B cell (primary cell): ENCODE measurements at regions of chr6 and their contacts with region 1.

Region 1: GRCh38 chr6:132279592-132280139 is 121.6 kb downstream of the MOXD1 start:
- DNase-seq: peak; percentile 90
- ATAC-seq: peak; percentile 84
- H3K4me3 ChIP-seq: peak overlapping the region; percentile 34 to 79 (median 48)
- H3K4me3 Mint-ChIP-seq: peak overlapping the region; percentile 92
- H3K27ac ChIP-seq: no peak overlapping the region
- H3K27ac Mint-ChIP-seq: peak overlapping the region; percentile 54
- H3K4me1 ChIP-seq: no peaks in the 10 kb centered on the region
- H3K4me1 Mint-ChIP-seq: no peaks in the 10 kb centered on the region
- H3K27me3 ChIP-seq: no peaks in the 10 kb centered on the region
- H3K27me3 Mint-ChIP-seq: peaks cover 4% of the 10 kb centered on the region
- CTCF ChIP-seq: peak; percentile 100

Region 2: GRCh38 chr6:131914967-131915751 is 364.5 kb before region 1 on chr6:
- CTCF ChIA-PET with region 1: interaction called, 10 read pairs
- POLR2A ChIA-PET with region 1: no interaction called
- intact Hi-C with region 1: loop called (anchors 2 kb)
- DNase-seq: peak; percentile 75
- ATAC-seq: peak; percentile 80
- H3K4me3 ChIP-seq: no peak overlapping the region
- H3K4me3 Mint-ChIP-seq: no peak overlapping the region
- H3K27ac ChIP-seq: no peak overlapping the region
- H3K27ac Mint-ChIP-seq: no peak overlapping the region
- H3K4me1 ChIP-seq: peaks cover 17 to 20% of the 10 kb centered on the region in 2 donors
- H3K4me1 Mint-ChIP-seq: peaks cover 21% of the 10 kb centered on the region
- H3K27me3 ChIP-seq: peaks cover 0 to 27% (median 12%) of the 10 kb centered on the region in 4 experiments
- H3K27me3 Mint-ChIP-seq: peaks cover 39% of the 10 kb centered on the region
- CTCF ChIP-seq: peak; percentile 88

Region 3: GRCh38 chr6:132063738-132064137 is 215.9 kb before region 1 on chr6:
- CTCF ChIA-PET with region 1: no interaction called
- POLR2A ChIA-PET with region 1: no interaction called
- intact Hi-C with region 1: no loop called
- DNase-seq: no peak
- ATAC-seq: no peak
- H3K4me3 ChIP-seq: no peak overlapping the region
- H3K4me3 Mint-ChIP-seq: no peak overlapping the region
- H3K27ac ChIP-seq: no peak overlapping the region
- H3K27ac Mint-ChIP-seq: no peak overlapping the region
- H3K4me1 ChIP-seq: no peaks in the 10 kb centered on the region
- H3K4me1 Mint-ChIP-seq: peaks cover 5% of the 10 kb centered on the region
- H3K27me3 ChIP-seq: no peaks in the 10 kb centered on the region
- H3K27me3 Mint-ChIP-seq: no peaks in the 10 kb centered on the region
- CTCF ChIP-seq: no peak

Region 4: DNA sequence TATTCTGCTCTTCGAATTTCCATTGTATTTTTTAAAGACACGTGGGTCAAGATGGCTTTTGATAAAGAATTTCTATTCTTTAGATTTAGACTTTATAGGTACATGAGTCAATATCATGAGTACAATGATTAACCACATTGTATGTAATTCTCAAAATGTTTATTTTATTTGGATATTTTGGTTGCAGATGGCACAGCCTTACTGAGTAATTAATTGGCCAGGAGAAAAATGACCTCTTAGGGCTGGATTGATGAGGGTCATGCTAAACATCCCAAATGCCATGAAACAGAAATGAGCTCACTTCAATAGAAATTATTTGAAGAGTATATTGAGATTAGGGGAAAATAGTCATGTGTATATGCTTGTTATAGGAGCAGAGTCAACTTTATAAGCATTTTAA is 197.2 kb before region 1 on chr6:
- CTCF ChIA-PET with region 1: no interaction called
- POLR2A ChIA-PET with region 1: no interaction called
- intact Hi-C with region 1: no loop called
- DNase-seq: no peak
- ATAC-seq: no peak
- H3K4me3 ChIP-seq: no peak overlapping the region
- H3K4me3 Mint-ChIP-seq: no peak overlapping the region
- H3K27ac ChIP-seq: no peak overlapping the region
- H3K27ac Mint-ChIP-seq: no peak overlapping the region
- H3K4me1 ChIP-seq: peaks cover 0 to 8% of the 10 kb centered on the region in 2 donors
- H3K4me1 Mint-ChIP-seq: peaks cover 14% of the 10 kb centered on the region
- H3K27me3 ChIP-seq: no peaks in the 10 kb centered on the region
- H3K27me3 Mint-ChIP-seq: no peaks in the 10 kb centered on the region
- CTCF ChIP-seq: no peak

Region 5: GRCh38 chr6:132333639-132334520 is 54.2 kb after region 1 on chr6:
- CTCF ChIA-PET with region 1: interaction called, 10 read pairs
- POLR2A ChIA-PET with region 1: no interaction called
- intact Hi-C with region 1: no loop called
- DNase-seq: no peak
- ATAC-seq: no peak
- H3K4me3 ChIP-seq: no peak overlapping the region
- H3K4me3 Mint-ChIP-seq: no peak overlapping the region
- H3K27ac ChIP-seq: no peak overlapping the region
- H3K27ac Mint-ChIP-seq: no peak overlapping the region
- H3K4me1 ChIP-seq: no peaks in the 10 kb centered on the region
- H3K4me1 Mint-ChIP-seq: peaks cover 5% of the 10 kb centered on the region
- H3K27me3 ChIP-seq: no peaks in the 10 kb centered on the region
- H3K27me3 Mint-ChIP-seq: peaks cover 5% of the 10 kb centered on the region
- CTCF ChIP-seq: no peak

Region 6: GRCh38 chr6:132391391-132392271 is 112.0 kb after region 1 on chr6:
- CTCF ChIA-PET with region 1: interaction called, 126 read pairs
- POLR2A ChIA-PET with region 1: no interaction called
- intact Hi-C with region 1: loop called (anchors 1 kb)
- DNase-seq: no peak
- ATAC-seq: no peak
- H3K4me3 ChIP-seq: no peak overlapping the region
- H3K4me3 Mint-ChIP-seq: no peak overlapping the region
- H3K27ac ChIP-seq: no peak overlapping the region
- H3K27ac Mint-ChIP-seq: no peak overlapping the region
- H3K4me1 ChIP-seq: peaks cover 5 to 27% of the 10 kb centered on the region in 2 donors
- H3K4me1 Mint-ChIP-seq: peaks cover 27% of the 10 kb centered on the region
- H3K27me3 ChIP-seq: no peaks in the 10 kb centered on the region
- H3K27me3 Mint-ChIP-seq: no peaks in the 10 kb centered on the region
- CTCF ChIP-seq: no peak

Region 7: DNA sequence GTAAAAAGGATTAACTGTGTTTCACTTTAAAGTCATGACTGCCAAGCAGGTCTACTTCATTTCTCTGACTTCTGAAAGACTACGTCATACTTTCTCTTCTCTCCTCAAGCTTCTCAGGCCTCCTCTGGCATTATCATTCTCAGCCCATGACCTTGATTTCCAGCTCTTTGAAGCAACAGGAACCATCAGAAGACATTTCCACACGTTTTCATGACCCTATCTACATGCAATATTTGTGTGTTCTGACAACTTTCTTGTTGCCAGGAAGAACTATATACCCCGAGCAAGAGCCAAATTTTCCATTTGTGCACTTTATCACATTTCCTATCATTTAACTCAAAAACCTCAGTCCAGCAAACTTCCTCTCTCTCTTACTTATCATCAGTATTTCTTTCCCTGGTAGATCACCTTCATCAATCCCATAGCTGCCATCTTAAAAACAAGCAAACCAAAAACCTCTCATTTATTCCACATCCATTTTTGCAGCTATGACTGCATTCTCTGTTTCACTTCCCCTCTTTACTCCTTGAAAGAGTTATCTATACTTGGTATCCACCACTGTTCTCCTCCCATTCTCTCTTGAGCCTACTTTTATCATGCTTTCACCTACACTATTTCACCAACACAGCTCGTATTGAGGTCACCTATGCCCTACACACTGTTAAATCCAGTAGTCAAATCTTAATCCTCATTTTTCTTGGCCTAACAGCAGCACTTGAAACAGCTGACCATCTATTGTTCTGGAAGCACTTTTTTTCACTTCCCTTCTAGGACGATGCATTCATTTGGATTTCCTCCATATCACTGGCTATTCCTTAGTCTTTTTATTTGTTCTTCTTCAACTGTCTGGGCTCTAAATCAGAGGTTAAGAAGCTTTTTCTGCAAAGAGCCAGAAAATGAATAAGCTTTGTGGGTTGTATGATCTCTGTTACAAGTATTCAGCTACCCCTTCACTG is 186.1 kb after region 1 on chr6:
- CTCF ChIA-PET with region 1: interaction called, 22 read pairs
- POLR2A ChIA-PET with region 1: no interaction called
- intact Hi-C with region 1: no loop called
- DNase-seq: no peak
- ATAC-seq: peak; percentile 41
- H3K4me3 ChIP-seq: no peak overlapping the region
- H3K4me3 Mint-ChIP-seq: no peak overlapping the region
- H3K27ac ChIP-seq: peak overlapping the region; percentile 34 to 62
- H3K27ac Mint-ChIP-seq: no peak overlapping the region
- H3K4me1 ChIP-seq: peaks cover 15 to 22% of the 10 kb centered on the region in 2 donors
- H3K4me1 Mint-ChIP-seq: peaks cover 7% of the 10 kb centered on the region
- H3K27me3 ChIP-seq: no peaks in the 10 kb centered on the region
- H3K27me3 Mint-ChIP-seq: no peaks in the 10 kb centered on the region
- CTCF ChIP-seq: no peak

Region 8: GRCh38 chr6:132490024-132490423 is 210.4 kb after region 1 on chr6:
- CTCF ChIA-PET with region 1: interaction called, 105 read pairs
- POLR2A ChIA-PET with region 1: interaction called, 3 read pairs
- intact Hi-C with region 1: no loop called
- DNase-seq: no peak
- ATAC-seq: no peak
- H3K4me3 ChIP-seq: peak overlapping the region in 4 of 5 experiments; percentile 42 to 57 (median 56)
- H3K4me3 Mint-ChIP-seq: no peak overlapping the region
- H3K27ac ChIP-seq: peak overlapping the region; percentile 77 to 92
- H3K27ac Mint-ChIP-seq: no peak overlapping the region
- H3K4me1 ChIP-seq: peaks cover 67 to 88% of the 10 kb centered on the region in 2 donors
- H3K4me1 Mint-ChIP-seq: peaks cover 38% of the 10 kb centered on the region
- H3K27me3 ChIP-seq: no peaks in the 10 kb centered on the region
- H3K27me3 Mint-ChIP-seq: no peaks in the 10 kb centered on the region
- CTCF ChIP-seq: no peak

Region 9: GRCh38 chr6:132768051-132768517 is 488.4 kb after region 1 on chr6:
- CTCF ChIA-PET with region 1: interaction called, 11 read pairs
- POLR2A ChIA-PET with region 1: no interaction called
- intact Hi-C with region 1: no loop called
- DNase-seq: peak; percentile 60
- ATAC-seq: peak; percentile 79
- H3K4me3 ChIP-seq: no peak overlapping the region
- H3K4me3 Mint-ChIP-seq: peak overlapping the region; percentile 27
- H3K27ac ChIP-seq: no peak overlapping the region
- H3K27ac Mint-ChIP-seq: peak overlapping the region; percentile 38
- H3K4me1 ChIP-seq: peaks cover 7 to 14% of the 10 kb centered on the region in 2 donors
- H3K4me1 Mint-ChIP-seq: peaks cover 22% of the 10 kb centered on the region
- H3K27me3 ChIP-seq: no peaks in the 10 kb centered on the region
- H3K27me3 Mint-ChIP-seq: no peaks in the 10 kb centered on the region
- CTCF ChIP-seq: peak; percentile 63